ENCODE measurements at regions of chr18 and their contacts with region 1.

Region 1: DNA sequence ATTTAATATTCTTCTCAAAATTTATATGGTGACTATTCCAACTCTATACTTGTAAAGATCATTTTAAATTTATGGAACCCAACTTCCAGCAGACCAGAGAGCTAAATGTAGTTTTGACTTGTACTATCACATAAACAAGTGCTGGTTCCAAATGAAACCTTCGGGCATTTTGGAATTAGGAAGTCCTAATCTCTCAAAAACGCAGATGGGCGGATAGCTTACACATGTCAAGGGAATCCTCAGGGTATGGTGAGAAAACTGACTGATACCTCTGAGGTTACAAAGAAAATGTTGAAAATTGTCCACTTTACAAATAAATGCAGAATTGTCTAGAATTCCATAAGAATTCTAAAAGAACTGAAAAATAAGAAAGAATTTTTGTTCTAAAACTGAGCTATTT is 224.1 kb downstream of the SS18 start:
- DNase-seq: no peak
- ATAC-seq: no peak
- H3K4me3 ChIP-seq: no peak overlapping the region
- H3K27ac ChIP-seq: no peak overlapping the region
- H3K4me1 ChIP-seq: no peaks in the 10 kb centered on the region
- H3K27me3 ChIP-seq: no peaks in the 10 kb centered on the region
- CTCF ChIP-seq: no peak
- EP300 ChIP-seq: no peak
- POLR2A ChIP-seq: no peak
- RAD21 ChIP-seq: no peak

Region 2: DNA sequence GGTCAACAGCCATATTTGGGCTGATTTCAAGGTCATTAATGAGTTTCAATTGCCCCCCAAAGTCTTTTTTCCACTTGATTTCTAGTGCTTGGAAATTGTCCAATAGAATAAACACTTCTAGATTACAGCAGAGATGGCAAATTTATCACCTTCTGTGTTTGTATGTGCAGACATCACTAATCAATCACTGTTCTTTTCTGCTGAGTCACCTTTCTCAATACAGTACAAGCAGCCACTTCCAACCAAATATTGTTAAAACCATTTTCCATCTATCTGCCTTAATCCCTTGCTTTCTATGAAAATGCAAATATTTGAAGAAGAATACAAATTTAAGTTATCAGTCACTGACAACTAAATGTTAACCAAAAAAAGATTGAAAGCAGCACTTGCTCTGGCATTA is 474.1 kb before region 1 on chr18:
- CTCF ChIA-PET with region 1: no interaction called
- POLR2A ChIA-PET with region 1: no interaction called
- in situ Hi-C with region 1: no loop called
- intact Hi-C with region 1: loop called (anchors 5 kb)
- DNase-seq: no peak
- ATAC-seq: no peak
- H3K4me3 ChIP-seq: no peak overlapping the region
- H3K27ac ChIP-seq: no peak overlapping the region
- H3K4me1 ChIP-seq: no peaks in the 10 kb centered on the region
- H3K27me3 ChIP-seq: no peaks in the 10 kb centered on the region
- CTCF ChIP-seq: no peak
- EP300 ChIP-seq: no peak
- POLR2A ChIP-seq: no peak
- RAD21 ChIP-seq: no peak

Region 3: DNA sequence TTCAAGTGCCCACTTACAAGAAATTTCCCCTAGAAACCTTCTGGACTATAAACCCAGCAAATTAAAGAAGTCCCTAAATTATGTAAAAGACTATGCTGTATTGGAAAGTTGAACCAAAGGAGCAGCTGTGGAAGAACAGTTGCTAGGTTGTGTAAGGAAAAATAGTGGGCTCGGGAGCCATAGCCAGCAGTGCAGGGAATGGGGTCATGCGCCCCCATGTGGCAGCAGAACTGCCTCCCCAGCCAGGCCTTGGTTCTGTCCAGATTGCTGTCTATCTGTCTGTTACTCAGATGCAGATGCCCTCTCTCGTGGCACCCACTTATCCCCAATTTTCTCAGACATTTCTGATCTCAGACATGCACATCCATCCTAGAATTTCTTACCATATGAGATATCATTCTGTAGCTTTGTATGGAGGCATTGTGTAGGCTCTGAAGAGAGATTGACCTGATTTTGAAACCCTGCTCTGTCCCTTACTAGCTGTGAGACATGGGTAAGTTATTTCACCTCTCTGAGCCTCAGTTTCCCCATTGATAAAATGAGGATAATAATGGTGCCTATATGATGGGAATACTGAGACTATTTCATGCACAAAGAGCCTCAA is 34.2 kb before region 1 on chr18:
- CTCF ChIA-PET with region 1: no interaction called
- POLR2A ChIA-PET with region 1: no interaction called
- in situ Hi-C with region 1: no loop called
- intact Hi-C with region 1: no loop called
- DNase-seq: peak; percentile 25
- ATAC-seq: peak; percentile 96
- H3K4me3 ChIP-seq: no peak overlapping the region
- H3K27ac ChIP-seq: no peak overlapping the region
- H3K4me1 ChIP-seq: peaks cover 13% of the 10 kb centered on the region
- H3K27me3 ChIP-seq: no peaks in the 10 kb centered on the region
- CTCF ChIP-seq: peak; percentile 72
- EP300 ChIP-seq: no peak
- POLR2A ChIP-seq: no peak
- RAD21 ChIP-seq: peak; percentile 53

Region 4: DNA sequence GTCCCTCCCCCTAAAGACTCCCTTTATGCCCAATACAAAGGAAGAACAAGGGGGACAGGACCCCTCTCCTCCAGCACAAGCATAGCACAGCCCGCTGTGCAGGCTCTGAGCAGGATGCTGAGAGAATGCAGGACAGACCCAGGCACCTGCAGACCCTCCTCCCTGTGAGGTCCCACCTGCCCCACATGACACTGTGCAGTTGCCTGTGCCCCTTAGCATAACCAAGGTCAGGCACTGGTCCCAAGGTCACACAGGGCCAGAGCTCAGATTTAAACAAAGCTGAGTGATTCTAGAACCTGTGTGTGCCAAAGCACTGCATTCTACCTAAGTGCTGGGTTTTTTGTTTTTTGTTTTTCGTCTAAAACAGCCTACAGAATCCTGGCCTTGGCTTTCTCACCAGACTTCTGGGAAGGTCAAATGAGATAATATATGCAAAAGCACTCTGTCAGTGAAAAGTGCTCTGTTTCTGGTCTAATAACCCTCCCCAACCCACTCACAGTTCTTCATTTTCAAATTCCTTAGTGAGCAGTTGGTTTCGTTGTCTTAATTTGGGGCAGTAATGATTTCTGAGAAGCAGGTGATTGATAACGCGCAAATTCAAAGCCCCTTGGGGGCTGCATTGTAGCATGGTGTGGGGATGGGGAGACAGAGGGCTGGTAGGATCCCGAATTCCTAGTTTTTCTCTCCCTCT is 556.3 kb after region 1 on chr18:
- CTCF ChIA-PET with region 1: no interaction called
- POLR2A ChIA-PET with region 1: no interaction called
- in situ Hi-C with region 1: no loop called
- intact Hi-C with region 1: no loop called
- DNase-seq: no peak
- ATAC-seq: peak; percentile 53
- H3K4me3 ChIP-seq: no peak overlapping the region
- H3K27ac ChIP-seq: no peak overlapping the region
- H3K4me1 ChIP-seq: peaks cover 14% of the 10 kb centered on the region; the same call in 1 of the 2 replicates
- H3K27me3 ChIP-seq: peaks cover 0 to 59% of the 10 kb centered on the region in 2 experiments; a peak in 4 of 5 replicates
- CTCF ChIP-seq: no peak
- EP300 ChIP-seq: no peak
- POLR2A ChIP-seq: no peak
- RAD21 ChIP-seq: no peak